ENCODE measurements at regions of chr20 and their contacts with region 1.

Region 1: DNA sequence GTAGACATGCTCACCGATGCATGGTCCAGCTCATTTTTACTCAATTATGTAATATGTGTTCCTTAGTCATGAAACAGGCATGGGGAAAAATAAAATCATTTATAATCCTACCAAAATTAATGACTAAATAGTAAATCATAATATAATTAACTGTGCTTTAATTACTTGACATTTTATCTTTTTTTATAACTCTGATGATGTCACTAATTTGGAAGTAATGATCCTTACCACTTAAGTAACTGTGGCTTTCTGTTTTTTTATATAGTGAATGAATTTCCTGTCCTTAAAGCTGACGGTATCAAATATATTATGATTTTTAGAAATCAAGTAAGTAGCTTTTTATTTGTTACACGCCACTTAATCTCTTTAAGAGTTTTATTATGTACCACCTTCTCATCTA is 32.2 kb downstream of the CSE1L start:
- DNase-seq: no peak
- ATAC-seq: no peak
- H3K4me3 ChIP-seq: no peak overlapping the region
- H3K27ac ChIP-seq: no peak overlapping the region
- H3K4me1 ChIP-seq: no peaks in the 10 kb centered on the region
- H3K27me3 ChIP-seq: no peaks in the 10 kb centered on the region
- CTCF ChIP-seq: no peak

Region 2: GRCh38 chr20:48841847-48842529 is 236.3 kb before region 1 on chr20:
- intact Hi-C with region 1: no loop called
- DNase-seq: no peak
- ATAC-seq: no peak
- H3K4me3 ChIP-seq: no peak overlapping the region
- H3K27ac ChIP-seq: no peak overlapping the region
- H3K4me1 ChIP-seq: peaks cover 0 to 11% (median 5%) of the 10 kb centered on the region in 9 donors
- H3K27me3 ChIP-seq: no peaks in the 10 kb centered on the region
- CTCF ChIP-seq: no peak

Region 3: DNA sequence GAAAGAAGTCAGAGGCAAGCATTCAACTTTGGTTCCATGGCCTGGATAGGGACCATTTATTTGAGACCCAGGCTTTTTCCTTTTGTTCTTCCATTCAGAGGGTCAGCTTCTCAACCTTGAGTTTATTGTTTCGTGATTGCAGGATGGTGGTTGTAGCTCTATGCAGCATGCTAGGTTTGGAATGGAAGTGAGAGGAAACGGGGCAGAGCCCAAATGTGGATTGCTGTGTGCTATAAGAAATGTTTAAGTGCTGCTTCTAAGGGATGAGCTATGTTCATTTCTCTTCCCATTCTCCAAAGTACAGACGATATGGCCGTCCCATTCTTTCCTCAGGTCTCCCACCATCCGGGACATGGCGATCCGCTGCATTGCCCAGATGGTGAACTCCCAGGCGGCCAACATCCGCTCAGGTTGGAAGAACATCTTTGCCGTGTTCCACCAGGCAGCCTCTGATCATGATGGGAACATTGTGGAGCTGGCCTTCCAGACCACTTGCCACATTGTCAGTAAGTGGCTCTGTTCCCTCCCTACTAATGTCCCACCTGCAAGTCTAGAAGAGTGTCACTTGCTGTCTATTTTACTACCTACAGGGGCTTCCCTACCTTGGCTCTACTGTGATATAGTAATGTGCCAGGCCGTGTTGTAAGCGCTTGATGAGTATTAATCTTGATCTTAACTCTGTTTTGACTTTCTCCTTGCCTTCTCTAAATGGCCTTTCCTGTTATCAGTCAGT is 68.2 kb before region 1 on chr20:
- intact Hi-C with region 1: loop called in 1 of 10 experiments (anchors 5 kb)
- DNase-seq: no peak
- ATAC-seq: peak in 2 of 8 donors; percentile 19 to 62
- H3K4me3 ChIP-seq: no peak overlapping the region
- H3K27ac ChIP-seq: peak overlapping the region in 2 of 10 donors; percentile 3 to 22
- H3K4me1 ChIP-seq: no peaks in the 10 kb centered on the region
- H3K27me3 ChIP-seq: no peaks in the 10 kb centered on the region
- CTCF ChIP-seq: no peak

Measured in heart right ventricle (tissue), 16 donors.